ENCODE measurements at regions of chr16 and their contacts with region 1.

Region 1: DNA sequence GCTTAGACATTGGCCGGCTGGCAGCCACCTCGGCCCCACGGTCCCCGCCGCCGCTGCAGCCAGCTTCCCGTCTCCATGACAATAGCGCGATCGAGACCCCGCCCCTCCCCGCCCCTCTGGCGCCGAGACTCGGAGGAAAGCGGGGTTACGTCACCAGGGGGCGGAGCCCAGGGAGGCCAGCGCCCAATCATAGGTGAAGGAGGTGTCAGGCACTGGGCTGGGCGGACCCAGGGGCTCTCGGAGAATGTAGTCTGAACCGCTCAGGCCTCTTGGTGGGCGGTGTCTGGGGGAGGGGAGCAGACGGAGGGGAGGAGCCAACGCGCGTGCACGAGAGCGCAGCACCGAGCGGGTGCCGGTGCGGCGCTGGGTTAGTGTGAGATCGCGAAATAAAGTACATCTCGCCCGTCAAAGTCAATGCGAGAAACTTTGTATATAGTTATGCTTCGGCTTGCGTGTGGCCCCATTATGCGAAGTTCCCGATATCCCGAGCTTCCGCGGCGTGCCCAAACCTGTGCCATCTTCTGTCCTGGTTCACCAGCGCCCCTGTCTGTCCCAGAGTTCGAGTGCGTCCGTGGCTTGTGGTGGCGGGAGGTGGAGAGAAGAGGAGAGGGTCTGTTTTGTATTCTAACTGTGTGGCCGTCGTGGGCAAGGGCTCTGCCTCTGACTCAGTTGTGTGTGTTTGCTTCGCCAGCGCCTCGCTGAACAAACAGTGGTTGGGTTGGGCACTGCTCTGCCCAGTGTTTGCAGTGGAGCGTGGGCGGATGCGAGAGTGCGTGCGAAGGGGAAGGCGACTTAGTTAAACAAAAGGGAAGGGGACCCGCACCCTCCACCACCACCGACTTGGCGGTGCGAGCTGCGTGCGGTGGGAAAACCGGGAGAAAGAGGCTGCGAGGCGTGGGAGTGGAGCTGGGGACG is 1.3 kb upstream of the IRX5 start:
- DNase-seq: peak; percentile 99 to 100
- H3K4me3 ChIP-seq: peak overlapping the region; percentile 92
- CTCF ChIP-seq: no peak
- POLR2A ChIP-seq: peak in 1 of 2 donors; percentile 35

Region 2: DNA sequence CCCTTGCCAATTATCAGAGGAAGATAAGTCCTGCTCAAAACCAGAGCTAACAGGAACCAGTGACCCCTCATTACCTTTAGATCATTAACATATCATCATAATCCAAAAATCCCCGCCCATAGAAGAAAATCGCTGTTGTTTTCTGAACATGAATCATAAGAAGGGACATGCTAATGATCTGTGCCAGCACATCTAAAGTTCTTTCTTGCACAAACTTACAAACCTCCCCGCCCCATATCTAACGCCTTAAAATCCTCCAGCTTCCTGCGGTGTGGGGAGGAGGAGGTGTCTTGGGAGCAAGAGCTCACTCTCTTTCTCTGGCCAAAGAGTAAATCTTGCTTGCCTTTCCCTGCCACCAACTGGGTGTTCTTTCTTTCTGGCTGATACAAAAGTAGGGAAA is 721.1 kb before region 1 on chr16:
- intact Hi-C with region 1: loop called (anchors 10 kb)
- DNase-seq: peak; percentile 67 to 85
- H3K4me3 ChIP-seq: no peak overlapping the region
- CTCF ChIP-seq: no peak
- POLR2A ChIP-seq: no peak

Region 3: DNA sequence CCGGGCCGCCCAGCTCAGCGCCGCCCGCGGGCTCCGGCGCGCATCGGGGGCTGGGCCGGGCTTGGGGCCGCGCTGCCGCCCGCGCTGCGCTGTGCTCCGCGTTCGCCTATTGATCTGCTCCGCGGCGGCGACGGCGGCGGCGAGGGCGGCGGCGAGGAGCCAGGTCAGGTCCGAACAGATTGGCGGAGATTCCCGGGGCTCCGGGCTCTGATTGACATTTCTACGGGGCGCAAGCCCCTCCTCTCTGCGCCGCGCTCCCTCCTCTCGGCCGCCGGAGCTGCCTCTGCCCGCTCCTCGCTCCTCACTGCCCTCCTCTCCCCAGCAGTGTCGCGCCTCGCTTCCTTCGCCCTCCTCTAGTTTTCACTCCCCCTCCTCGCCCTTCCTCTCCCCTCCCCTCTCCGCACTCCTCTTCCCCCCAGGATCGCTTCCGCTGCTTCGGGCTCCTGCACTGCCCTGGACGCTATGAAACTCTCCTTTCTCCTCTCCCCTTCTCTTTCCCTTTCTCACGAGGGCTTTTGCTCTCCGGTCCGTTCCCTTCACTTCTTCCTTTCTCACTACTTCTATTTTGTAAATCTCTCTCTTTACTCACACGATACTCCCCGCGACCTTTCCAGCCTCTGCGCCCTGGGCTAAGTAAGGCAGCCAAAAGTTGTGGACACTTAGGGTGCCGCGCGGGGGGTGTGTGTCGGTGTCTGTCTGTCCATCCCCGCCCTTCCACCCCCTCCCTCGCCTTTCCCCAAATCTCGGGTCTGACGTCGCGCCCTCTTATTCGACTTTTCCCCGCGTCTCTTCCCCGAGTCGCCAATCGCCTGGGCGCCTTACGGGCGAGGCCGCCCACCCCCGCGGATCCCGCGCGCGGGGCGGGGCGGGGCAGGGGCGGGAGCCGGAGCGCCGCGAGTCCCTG is 643.0 kb before region 1 on chr16 and contains the start of gene IRX3:
- intact Hi-C with region 1: loop called (anchors 10 kb)
- DNase-seq: peak; percentile 90 to 97
- H3K4me3 ChIP-seq: peak within 1 kb of the TSS; percentile 75
- CTCF ChIP-seq: peak in 1 of 3 donors; percentile 36
- POLR2A ChIP-seq: no peak
- total RNA-seq, gene IRX3: 79.7 to 181 (median 150) TPM

Region 4: DNA sequence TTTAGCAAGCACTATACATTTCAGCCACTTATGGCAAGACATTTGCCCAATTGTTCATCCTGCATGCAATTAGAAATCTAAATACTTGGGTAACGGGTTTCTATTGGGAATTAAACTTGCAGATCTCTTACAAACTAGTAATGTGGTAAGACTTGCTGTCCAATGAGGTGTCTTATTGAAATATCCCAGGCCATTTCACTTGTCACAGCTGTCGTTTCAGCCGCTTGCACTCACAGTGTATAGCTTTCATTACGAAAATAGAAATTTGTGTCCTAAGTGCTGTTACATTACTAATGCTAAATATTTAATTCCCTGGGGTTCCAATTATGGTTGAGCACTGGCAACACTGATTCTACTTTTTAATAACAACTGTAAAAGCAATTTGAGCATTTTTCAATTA is 39.0 kb before region 1 on chr16:
- intact Hi-C with region 1: no loop called
- DNase-seq: no peak
- H3K4me3 ChIP-seq: no peak overlapping the region
- CTCF ChIP-seq: no peak
- POLR2A ChIP-seq: no peak

Measured in lower leg skin (tissue), 4 donors.